ENCODE measurements at regions of chr5 and their contacts with region 1.

Region 1: GRCh38 chr5:71601222-71602041 is 14.3 kb downstream of the MCCC2 start:
- DNase-seq: peak; percentile 88
- H3K4me3 Mint-ChIP-seq: no peak overlapping the region
- H3K27ac Mint-ChIP-seq: peak overlapping the region; percentile 86
- H3K4me1 Mint-ChIP-seq: peaks cover 31% of the 10 kb centered on the region
- H3K27me3 Mint-ChIP-seq: no peaks in the 10 kb centered on the region

Region 2: GRCh38 chr5:71455427-71456361 is 145.7 kb before region 1 on chr5 and contains the start of gene BDP1:
- CTCF ChIA-PET with region 1: no interaction called
- intact Hi-C with region 1: loop called (anchors 1 kb)
- DNase-seq: peak; percentile 99
- H3K4me3 Mint-ChIP-seq: peak within 1 kb of the TSS; percentile 92
- H3K27ac Mint-ChIP-seq: peak within 1 kb of the TSS; percentile 95
- H3K4me1 Mint-ChIP-seq: peaks cover 20% of the 10 kb centered on the region
- H3K27me3 Mint-ChIP-seq: peaks cover 3% of the 10 kb centered on the region
- total RNA-seq, gene BDP1: 20.6 to 20.8 TPM

Region 3: DNA sequence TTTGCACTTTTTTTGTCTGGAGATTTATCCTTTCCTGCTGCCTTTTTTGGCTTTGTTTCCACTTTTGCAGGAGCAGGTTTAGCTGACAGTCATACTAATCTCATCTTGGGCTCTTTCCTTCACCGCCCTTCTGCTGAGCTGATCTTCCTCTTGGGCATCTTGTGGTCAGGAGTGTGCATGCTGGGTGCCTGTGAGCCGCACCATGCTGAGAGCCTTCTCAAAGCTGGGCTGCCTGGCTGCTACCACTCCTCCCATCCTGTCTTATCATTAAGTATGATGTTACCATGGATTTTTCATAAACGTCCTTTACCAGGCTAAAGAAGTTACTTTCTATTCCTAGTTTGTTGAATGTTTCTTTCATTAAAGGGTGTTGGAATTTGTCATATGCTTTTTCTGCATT is 63.7 kb before region 1 on chr5:
- CTCF ChIA-PET with region 1: no interaction called
- intact Hi-C with region 1: loop called (anchors 2 kb)
- DNase-seq: no peak
- H3K4me3 Mint-ChIP-seq: no peak overlapping the region
- H3K27ac Mint-ChIP-seq: no peak overlapping the region
- H3K4me1 Mint-ChIP-seq: peaks cover 11% of the 10 kb centered on the region
- H3K27me3 Mint-ChIP-seq: no peaks in the 10 kb centered on the region

Region 4: DNA sequence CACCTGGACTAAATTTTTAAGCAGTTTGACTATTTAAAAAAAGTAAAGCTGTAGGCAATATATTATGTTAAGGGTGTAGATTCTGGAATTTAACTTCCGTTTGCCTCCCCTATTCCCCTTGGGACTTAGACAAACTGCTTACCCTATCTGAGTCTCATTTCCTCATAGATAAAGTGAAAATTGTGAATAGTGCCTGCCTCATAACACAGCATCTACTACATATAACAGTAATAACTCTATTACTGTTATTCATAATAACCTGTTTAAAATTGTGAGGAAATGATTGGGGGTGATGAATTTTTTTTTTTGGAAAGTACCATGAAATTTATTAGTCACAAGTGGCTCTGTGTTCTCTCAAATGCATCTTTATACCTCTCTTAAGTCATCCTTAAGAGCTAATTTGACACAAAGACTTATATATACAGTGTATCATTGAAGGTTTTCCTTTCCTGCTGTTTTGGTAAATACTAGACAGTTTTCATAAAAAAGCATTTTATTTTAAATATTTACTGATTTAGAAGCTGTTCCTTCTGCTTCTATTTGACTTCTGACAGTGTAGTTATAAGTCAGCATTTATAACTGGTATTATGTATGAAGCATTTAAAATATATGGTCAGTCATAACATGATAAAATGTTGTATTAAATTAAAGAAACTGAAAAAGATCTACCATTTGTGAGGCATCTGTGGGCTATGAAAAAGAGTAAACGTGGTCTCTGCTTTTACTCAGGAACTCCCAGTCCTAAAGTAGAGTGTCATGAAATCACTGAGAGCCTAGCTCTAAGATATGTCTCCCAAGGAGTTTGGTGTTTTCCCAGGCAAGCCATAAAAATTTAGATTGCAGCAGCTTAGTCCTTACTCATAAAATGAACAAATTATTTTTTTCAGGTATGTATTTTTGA is 32.1 kb after region 1 on chr5:
- CTCF ChIA-PET with region 1: no interaction called
- intact Hi-C with region 1: loop called (anchors 1 kb)
- DNase-seq: no peak
- H3K4me3 Mint-ChIP-seq: no peak overlapping the region
- H3K27ac Mint-ChIP-seq: no peak overlapping the region
- H3K4me1 Mint-ChIP-seq: peaks cover 5% of the 10 kb centered on the region
- H3K27me3 Mint-ChIP-seq: no peaks in the 10 kb centered on the region

Region 5: DNA sequence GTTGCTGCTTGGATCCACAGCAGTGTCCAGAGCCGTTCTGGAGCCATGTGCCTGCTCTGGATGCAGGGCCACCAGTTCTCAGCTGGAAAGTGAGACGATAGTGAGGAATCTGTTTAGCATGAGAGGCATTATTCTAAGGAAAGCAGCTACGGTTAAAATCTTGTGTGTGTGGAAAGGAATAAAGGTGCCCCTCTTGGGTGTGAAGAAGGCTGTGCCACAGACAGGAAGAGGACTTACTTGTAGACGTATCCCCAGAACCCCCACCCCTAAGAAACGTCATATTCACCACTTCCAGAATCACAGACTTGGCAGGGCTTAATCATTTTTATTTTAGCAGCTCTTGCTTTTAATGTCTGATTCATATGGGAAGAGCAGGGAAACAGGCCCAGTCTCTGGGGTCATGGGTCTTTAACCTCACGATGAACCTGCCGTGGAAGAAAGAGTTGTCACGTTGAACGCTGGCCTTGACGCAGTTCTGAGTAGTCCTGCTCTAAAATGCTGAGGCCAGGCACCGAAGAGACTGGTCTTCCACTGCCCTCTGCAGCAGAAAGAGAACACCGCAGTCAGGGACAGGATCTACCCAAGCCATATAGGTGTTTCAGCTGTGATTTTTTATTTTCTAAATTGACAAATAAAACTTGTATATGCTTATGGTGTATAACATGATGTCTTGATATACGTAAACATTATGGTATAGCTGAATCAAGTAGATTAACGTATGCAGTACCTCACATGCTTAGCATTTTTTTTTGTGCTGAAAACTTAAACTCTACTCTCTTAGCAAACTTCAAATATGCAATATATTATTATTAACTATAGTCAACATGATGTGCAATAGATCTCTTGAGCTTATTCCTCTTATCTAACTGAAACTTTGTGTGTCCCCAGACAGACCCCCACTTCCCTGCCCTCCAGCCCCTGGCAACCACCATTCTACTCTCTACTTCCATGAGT is 156.4 kb after region 1 on chr5:
- CTCF ChIA-PET with region 1: interaction called, 5 read pairs
- intact Hi-C with region 1: loop called (anchors 1 kb)
- DNase-seq: peak; percentile 75
- H3K4me3 Mint-ChIP-seq: no peak overlapping the region
- H3K27ac Mint-ChIP-seq: no peak overlapping the region
- H3K4me1 Mint-ChIP-seq: peaks cover 6% of the 10 kb centered on the region
- H3K27me3 Mint-ChIP-seq: peaks cover 3% of the 10 kb centered on the region

Region 6: DNA sequence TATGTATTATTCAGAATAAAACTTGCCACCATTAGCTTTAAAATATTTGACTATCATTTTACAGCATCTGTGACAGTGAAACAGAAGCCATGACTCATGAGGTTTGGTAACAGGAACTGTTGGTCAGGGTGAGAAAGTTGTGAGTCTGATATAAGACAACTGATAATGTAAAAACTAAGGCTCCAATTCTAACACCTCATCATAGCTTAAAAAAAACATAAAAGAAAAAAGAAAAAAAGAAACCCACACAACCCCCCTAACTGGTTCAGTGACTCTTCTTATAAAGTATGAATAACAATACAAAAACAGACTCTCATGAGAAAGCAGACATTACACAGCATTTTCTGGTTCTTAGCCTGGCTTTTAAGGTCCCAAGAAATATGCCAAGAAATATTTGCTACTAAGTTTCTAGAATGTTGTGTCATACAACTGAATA is 632.9 kb after region 1 on chr5:
- CTCF ChIA-PET with region 1: no interaction called
- intact Hi-C with region 1: loop called (anchors 1 kb)
- DNase-seq: peak; percentile 47
- H3K4me3 Mint-ChIP-seq: no peak overlapping the region
- H3K27ac Mint-ChIP-seq: peak overlapping the region; percentile 30
- H3K4me1 Mint-ChIP-seq: peaks cover 46% of the 10 kb centered on the region
- H3K27me3 Mint-ChIP-seq: no peaks in the 10 kb centered on the region